ENCODE measurements at regions of chr1 and their contacts with region 1.

Region 1: GRCh38 chr1:150049926-150050325 is 17.6 kb upstream of the VPS45 start:
- DNase-seq: no peak
- H3K4me3 ChIP-seq: no peak overlapping the region
- H3K4me1 ChIP-seq: peaks cover 4% of the 10 kb centered on the region
- H3K27me3 ChIP-seq: no peaks in the 10 kb centered on the region

Region 2: DNA sequence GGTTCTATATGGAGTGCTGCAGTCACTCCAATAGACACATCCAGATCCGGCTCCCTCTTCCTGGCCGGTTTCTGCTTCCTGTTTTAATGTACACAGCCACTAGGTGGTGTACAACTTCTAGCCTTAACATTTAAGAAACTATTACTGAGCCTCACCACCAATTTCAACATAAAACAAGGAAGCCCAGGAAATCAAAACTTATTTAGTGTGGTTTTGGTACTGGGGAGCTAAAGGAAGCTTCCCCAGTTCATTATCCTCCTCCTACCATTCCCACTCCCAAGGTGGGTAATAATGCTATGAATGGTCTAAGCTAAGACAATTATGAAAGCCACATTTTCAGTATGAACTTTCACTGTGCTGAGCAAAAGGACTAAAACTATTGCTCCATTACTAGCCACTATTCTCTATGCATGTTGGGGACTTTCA is 87.8 kb before region 1 on chr1:
- in situ Hi-C with region 1: loop called (anchors 5 kb)
- DNase-seq: peak; percentile 54 to 55
- H3K4me3 ChIP-seq: no peak overlapping the region
- H3K4me1 ChIP-seq: no peaks in the 10 kb centered on the region
- H3K27me3 ChIP-seq: no peaks in the 10 kb centered on the region